Activated CD4-positive, alpha-beta T cell treated with anti-CD3 and anti-CD28 coated beads for 36 hours (primary cell): ENCODE measurements at regions of chr2 and their contacts with region 1.

Region 1: DNA sequence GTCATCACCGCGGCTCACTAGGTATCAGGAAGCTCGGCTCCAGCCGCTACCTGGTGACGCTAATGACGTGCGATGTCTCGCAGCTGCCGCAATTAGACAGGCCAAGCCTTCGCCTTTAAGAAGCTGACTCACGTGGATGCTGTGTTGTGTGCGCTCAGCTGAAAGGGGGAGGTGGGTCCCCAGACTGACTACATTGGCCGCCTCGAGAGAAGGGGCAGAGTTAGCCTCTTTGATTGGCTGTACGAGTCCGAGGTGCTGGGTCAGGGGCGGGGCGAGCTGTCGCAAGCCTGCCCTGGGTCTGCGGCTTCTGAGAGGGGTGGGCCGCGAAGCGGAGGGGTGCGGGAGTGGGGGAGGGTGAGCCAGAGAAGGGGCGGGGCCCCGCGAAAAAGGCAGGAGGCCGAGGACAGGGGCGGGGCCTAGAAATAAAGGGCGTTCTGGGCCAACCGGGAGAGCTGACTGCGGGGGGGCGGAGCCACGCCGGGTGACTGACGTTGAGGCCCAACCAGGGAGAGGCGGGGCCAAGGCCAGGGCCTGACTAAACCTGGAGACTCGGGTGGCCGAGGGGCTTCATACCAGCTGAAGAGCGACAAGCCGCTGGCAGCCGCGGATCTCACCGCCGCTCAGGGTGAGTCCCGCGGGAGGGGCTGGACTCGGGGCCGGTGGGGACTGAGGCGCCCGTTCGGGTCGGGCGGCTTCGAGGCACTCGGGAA is at the start of gene YPEL5:
- DNase-seq: peak; percentile 99
- ATAC-seq: peak; percentile 94
- H3K4me3 Mint-ChIP-seq: peak within 1 kb of the TSS; percentile 81
- H3K27ac Mint-ChIP-seq: peak within 1 kb of the TSS; percentile 96
- H3K4me1 Mint-ChIP-seq: peaks cover 55% of the 10 kb centered on the region
- H3K27me3 Mint-ChIP-seq: no peaks in the 10 kb centered on the region
- total RNA-seq, gene YPEL5: 27.2 to 35.8 TPM

Region 2: DNA sequence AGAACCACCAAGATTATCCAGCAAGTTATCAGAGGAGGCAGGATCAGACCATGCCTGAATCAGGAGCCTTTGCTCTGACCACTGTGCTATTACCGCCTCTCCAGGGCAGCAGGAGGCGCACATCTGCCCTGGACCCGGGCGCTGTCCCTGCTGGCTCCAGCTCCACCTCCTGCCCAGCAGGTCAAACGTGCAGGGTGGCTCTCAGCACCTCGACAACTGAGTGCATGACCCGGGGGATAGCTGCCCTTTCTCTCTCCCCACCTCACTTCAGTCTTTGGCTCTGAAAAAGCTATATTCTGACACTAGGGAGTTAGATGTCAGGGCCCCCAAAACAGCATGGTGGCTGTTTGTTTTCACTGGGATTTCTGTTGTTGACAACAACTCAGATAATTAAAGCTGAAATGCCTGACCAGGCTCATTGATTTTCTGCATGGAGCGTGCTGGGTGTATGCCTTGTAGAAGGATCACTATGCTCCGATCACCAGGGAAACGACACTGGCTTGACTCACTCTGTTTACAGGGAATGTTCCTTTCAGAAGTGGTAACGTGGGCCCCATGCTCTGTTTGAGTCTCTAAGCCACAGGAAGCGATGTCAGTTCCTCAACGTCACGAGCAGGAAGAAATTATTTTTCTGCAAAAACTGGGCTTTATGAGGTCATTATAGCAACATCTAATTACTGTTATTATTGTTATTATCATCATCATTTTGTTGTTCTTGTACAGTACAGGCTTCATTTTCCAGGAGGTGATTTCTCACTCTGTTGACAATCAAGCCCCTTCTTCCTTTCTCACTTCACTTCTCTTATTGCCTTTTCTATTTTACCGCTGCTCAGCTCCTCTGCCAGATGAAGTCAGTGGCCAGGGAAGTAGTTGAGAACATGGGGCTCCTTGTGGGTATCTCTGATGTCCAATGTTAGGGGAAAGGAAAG is 1525.2 kb before region 1 on chr2:
- CTCF ChIA-PET with region 1: no interaction called
- POLR2A ChIA-PET with region 1: no interaction called
- intact Hi-C with region 1: loop called in 1 of 2 experiments (anchors 10 kb)
- DNase-seq: peak; percentile 81
- ATAC-seq: peak; percentile 73
- H3K4me3 Mint-ChIP-seq: peak overlapping the region; percentile 49
- H3K27ac Mint-ChIP-seq: peak overlapping the region; percentile 96
- H3K4me1 Mint-ChIP-seq: peaks cover 95% of the 10 kb centered on the region
- H3K27me3 Mint-ChIP-seq: no peaks in the 10 kb centered on the region

Region 3: DNA sequence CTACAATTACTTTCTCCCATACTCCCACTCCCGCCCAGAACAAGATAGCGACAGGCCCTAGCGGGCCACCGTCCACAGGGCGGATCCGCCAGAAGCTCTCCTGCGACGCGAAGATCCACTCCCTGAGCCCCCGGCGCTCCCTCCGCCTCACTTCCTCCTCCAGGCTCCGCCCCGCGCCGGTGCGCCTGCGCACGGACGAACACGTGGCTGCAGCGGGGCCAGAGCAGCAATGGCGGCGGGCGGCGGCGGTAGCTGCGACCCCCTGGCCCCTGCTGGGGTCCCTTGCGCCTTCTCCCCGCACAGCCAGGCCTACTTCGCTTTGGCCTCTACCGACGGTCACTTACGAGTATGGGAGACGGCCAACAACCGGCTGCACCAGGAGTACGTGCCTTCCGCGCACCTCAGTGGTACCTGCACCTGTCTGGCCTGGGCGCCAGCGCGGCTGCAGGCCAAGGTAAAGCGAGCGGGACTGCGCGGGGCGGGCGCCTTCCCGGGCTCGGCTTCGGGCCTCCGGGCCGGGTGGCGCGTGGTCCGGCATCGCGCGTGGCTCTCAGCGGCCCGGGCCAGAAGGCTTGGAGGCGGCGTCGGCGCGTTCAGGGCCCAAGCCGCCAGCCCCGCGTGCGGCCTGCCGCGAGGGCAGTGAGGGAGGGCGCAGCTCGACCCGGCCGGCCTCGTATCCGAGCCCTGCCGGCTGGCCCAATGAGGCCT is 1252.0 kb before region 1 on chr2 and contains the start of gene WDR43:
- CTCF ChIA-PET with region 1: no interaction called
- POLR2A ChIA-PET with region 1: no interaction called
- intact Hi-C with region 1: loop called in 1 of 2 experiments (anchors 10 kb)
- DNase-seq: peak; percentile 99
- ATAC-seq: peak; percentile 94
- H3K4me3 Mint-ChIP-seq: peak within 1 kb of the TSS; percentile 97
- H3K27ac Mint-ChIP-seq: peak within 1 kb of the TSS; percentile 95
- H3K4me1 Mint-ChIP-seq: peaks cover 32% of the 10 kb centered on the region
- H3K27me3 Mint-ChIP-seq: no peaks in the 10 kb centered on the region
- total RNA-seq, gene WDR43: 109 to 170 TPM

Region 4: DNA sequence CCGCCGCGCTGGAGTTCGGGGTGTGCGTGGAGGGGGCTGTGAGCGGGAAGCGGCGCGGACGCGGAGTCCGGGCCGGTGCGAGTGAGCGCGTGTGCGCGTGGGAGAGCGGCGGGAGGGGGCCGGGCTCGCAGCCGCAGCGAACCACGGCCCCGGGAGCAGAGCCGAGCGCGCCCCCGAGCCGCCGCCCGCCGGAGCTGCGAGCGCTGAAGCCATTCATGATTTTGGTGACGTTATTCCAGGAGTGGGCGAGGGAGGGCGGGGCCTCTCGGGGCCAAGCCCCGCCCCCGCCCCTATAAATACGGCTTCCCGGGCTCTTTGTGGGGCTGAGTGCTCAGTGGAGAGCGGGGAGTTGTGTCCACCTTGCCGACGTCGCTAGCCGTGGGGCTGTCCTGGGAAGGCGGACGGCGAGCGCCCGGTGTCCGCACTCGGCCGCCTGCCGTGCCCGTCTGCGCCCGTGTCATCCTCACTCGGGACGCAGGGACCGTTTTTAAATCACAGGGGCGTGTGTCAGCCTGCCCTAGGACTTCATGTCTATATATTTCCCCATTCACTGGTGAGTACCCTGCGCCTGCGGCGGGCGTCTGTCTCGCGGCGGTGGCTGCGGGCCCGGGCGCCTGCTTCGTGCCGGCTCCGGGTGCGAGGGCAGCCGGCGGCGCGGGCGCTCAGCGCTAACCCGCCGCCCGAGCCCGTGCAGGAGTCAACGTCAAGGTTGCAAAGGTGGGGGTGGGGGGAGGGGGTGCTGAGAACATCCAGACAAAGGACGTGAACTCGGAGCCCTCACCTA is 84.8 kb after region 1 on chr2 and contains the start of gene LBH:
- CTCF ChIA-PET with region 1: interaction called, 3 read pairs
- POLR2A ChIA-PET with region 1: interaction called, 43 read pairs
- intact Hi-C with region 1: loop called (anchors 1 kb)
- DNase-seq: peak; percentile 94
- ATAC-seq: peak; percentile 41
- H3K4me3 Mint-ChIP-seq: peak within 1 kb of the TSS; percentile 76
- H3K27ac Mint-ChIP-seq: peak within 1 kb of the TSS; percentile 93
- H3K4me1 Mint-ChIP-seq: peaks cover 65% of the 10 kb centered on the region
- H3K27me3 Mint-ChIP-seq: peaks cover 10% of the 10 kb centered on the region
- total RNA-seq, gene LBH: 89.6 to 108 TPM

Region 5: GRCh38 chr2:30421604-30422443 is 275.2 kb after region 1 on chr2:
- CTCF ChIA-PET with region 1: no interaction called
- POLR2A ChIA-PET with region 1: no interaction called
- intact Hi-C with region 1: loop called (anchors 1 kb)
- DNase-seq: peak; percentile 48
- ATAC-seq: peak; percentile 57
- H3K4me3 Mint-ChIP-seq: peak overlapping the region; percentile 68
- H3K27ac Mint-ChIP-seq: peak overlapping the region; percentile 96
- H3K4me1 Mint-ChIP-seq: peaks cover 48% of the 10 kb centered on the region
- H3K27me3 Mint-ChIP-seq: no peaks in the 10 kb centered on the region

Region 6: DNA sequence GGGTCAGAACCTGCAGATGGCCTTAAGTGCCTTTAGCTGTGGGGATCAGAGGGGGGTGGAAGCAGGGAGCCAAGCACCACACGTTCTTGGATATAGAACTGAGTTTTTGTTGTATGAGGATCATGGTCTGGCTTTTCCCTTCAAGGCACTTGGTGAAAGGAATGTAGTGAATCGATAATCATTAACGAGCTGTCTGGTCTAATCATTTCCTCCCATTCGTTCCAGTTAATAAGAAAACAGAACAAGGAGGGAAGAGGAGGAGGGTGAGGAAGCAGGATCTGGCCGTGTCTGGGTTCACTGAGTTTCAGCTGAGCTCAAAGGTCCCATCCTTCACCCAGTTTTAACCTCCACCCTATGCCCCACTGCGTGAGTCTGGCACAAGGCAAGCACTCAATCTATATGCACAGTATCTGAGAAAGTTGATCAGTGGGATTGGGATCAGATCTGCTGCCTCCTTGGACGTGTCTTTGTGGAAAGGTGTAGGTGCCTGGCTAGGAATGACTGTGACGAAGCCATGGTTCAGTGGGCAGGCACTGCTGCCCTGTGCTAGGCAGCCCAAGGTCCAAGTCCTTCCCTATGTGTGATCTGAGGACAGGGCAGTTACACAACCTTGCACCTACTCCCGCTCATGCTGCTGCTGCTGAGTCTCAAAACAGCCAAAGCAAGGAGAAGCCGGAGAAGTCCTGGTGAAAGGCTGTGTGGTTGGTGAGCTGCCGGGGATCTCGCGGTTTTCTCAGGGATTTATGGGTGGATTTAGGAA is 936.8 kb after region 1 on chr2:
- CTCF ChIA-PET with region 1: no interaction called
- POLR2A ChIA-PET with region 1: no interaction called
- intact Hi-C with region 1: no loop called
- DNase-seq: no peak
- ATAC-seq: no peak
- H3K4me3 Mint-ChIP-seq: no peak overlapping the region
- H3K27ac Mint-ChIP-seq: no peak overlapping the region
- H3K4me1 Mint-ChIP-seq: no peaks in the 10 kb centered on the region
- H3K27me3 Mint-ChIP-seq: peaks cover 2% of the 10 kb centered on the region

Region 7: DNA sequence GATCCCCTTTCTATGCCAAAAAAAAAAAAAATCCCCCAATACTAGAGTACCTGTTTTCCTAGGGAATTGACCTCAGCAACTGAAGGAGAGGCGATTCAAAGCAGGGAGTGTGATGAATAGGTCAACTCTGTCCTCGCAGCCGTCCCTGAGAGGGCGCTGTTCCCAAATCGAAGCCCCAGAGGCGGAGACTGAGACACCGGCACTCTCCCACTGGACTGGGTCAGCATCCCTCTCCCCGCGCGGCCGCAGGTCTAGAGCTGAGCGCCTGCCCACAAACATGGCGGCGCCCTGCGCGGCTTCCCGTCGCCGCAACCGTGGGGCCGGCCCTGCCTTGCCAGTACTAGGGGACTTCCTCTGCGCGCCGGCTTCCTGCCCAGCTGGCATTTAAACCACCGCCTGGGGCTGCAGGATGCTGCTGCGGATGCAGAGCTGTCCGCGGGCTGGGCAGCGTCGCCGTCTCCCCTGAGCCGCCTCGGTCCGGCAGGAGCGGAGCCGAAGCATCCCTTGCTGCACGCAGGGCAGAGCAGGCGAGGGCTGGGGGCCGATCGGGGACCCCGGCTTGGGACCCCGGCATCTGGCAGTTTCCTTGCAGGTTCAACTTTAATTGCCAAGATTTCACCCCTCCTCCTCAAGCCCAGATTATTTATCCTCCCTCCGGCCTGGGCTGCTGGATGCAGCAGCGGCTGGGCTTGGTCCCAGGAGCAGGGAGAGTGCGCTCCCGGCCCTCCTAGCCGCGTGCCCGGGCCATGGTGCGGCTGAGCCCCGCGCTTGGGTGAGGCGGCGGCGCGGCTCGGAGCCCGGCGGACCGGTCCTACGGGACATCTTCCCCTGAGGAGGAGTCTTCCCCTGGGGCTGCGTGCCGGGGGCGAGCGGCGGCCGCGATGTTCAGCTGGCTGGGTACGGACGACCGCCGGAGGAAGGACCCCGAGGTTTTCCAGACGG is 1087.4 kb after region 1 on chr2 and contains the start of gene EHD3:
- CTCF ChIA-PET with region 1: no interaction called
- POLR2A ChIA-PET with region 1: no interaction called
- intact Hi-C with region 1: loop called in 1 of 2 experiments (anchors 5 kb)
- DNase-seq: peak; percentile 90
- ATAC-seq: peak; percentile 99
- H3K4me3 Mint-ChIP-seq: peak within 1 kb of the TSS; percentile 70
- H3K27ac Mint-ChIP-seq: peak within 1 kb of the TSS; percentile 34
- H3K4me1 Mint-ChIP-seq: peaks cover 19% of the 10 kb centered on the region
- H3K27me3 Mint-ChIP-seq: no peaks in the 10 kb centered on the region
- total RNA-seq, gene EHD3: 1.4 to 1.6 TPM